ENCODE measurements at regions of chr12 and their contacts with region 1.

Region 1: DNA sequence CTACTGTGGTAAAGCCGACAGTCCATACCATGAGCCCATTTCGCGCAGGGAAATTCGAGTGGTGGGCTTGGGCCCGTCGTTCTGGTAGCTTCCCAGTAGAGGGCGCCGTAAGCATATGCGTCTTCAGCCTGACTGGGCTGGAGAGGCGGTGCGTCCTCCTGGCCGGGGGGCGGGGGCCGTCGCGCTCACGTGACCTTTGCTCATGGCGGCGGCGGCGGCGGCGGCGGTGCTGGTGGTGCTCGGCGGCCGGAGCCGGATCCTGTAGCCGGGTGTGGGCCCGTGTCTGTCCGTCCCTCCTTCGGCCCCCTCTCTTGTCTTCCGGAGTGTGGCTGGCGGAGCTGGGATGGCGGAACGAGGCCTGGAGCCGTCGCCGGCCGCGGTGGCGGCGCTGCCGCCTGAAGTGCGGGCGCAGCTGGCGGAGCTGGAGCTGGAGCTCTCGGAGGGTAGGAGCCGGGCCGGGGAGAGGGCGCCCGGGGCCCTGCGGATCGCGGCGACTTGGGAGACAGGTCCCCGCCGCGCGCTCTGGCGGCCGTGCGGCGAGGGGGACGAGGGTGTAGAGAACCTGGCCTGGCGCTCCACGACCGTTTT is at the start of gene DIP2B:
- DNase-seq: peak; percentile 96 to 98 (median 96)
- ATAC-seq: peak; percentile 88 to 98 (median 94)
- H3K4me3 ChIP-seq: peak within 1 kb of the TSS; percentile 69 to 97 (median 82)
- H3K27ac ChIP-seq: peak within 1 kb of the TSS; percentile 87 to 98 (median 94)
- H3K4me1 ChIP-seq: peaks cover 15 to 50% (median 44%) of the 10 kb centered on the region in 12 donors
- H3K27me3 ChIP-seq: no peaks in the 10 kb centered on the region
- CTCF ChIP-seq: peak; percentile 88 to 97 (median 94)
- POLR2A ChIP-seq: peak in 1 of 2 donors; percentile 56
- total RNA-seq, gene DIP2B: 12.0 to 25.0 (median 17.3) TPM

Region 2: GRCh38 chr12:50066433-50066832 is 438.5 kb before region 1 on chr12:
- intact Hi-C with region 1: no loop called
- DNase-seq: peak in 2 of 5 donors; percentile 35 to 42
- ATAC-seq: peak in 3 of 4 donors; percentile 43 to 61 (median 58)
- H3K4me3 ChIP-seq: no peak overlapping the region
- H3K27ac ChIP-seq: peak overlapping the region in 1 of 12 donors; percentile 34
- H3K4me1 ChIP-seq: peaks cover 0 to 13% (median 2%) of the 10 kb centered on the region in 12 donors
- H3K27me3 ChIP-seq: no peaks in the 10 kb centered on the region
- CTCF ChIP-seq: no peak
- POLR2A ChIP-seq: no peak

Region 3: DNA sequence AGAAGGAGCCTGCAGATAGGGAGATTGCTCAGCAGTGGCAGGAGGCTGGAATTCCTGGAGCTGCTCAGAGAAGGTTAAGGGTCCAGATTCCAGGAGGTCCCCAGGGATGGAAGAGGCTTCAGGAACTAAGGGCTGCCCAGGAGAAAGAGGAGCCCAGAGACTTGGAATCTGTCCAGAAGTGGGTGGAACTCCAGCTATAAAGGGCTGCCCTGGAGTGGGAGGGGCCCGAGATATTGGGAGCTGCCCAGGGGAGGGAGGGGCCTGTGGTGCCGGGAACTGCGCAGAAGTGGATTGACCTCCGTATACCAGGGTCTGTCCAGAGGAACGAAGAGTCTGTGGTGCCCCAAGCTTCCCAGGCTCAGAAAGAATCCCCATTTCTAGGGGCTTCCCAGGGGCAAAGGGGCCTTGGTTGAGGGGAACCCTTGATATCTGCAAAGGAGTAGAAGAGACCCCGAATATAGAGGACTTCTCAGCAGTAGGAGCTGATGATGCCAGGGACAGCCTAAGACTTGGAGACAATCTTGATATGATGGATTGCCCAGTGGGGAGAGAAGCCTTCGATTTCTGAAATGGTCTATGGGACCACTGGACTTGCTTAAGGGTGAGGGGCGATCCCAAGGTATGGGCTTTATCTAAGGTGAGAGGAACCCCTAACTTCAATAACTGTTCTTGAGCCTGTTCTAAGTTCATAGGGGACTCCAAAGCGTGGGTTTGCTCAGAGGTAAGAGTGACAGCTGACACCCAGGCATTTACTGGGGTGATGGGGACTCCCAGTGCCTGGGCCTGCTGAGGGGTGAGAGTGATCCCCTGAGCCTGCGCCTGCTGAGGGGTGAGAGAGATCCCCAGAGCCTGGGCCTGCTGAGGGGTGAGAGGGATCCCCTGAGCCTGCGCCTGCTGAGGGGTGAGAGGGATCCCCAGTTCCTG is 153.5 kb before region 1 on chr12:
- intact Hi-C with region 1: no loop called
- DNase-seq: peak; percentile 28 to 71 (median 53)
- ATAC-seq: peak; percentile 47 to 73 (median 66)
- H3K4me3 ChIP-seq: no peak overlapping the region
- H3K27ac ChIP-seq: no peak overlapping the region
- H3K4me1 ChIP-seq: peaks cover 0 to 17% (median 4%) of the 10 kb centered on the region in 12 donors
- H3K27me3 ChIP-seq: no peaks in the 10 kb centered on the region
- CTCF ChIP-seq: no peak
- POLR2A ChIP-seq: no peak

Region 4: GRCh38 chr12:50453874-50454273 is 51.0 kb before region 1 on chr12:
- intact Hi-C with region 1: no loop called
- DNase-seq: no peak
- ATAC-seq: no peak
- H3K4me3 ChIP-seq: no peak overlapping the region
- H3K27ac ChIP-seq: no peak overlapping the region
- H3K4me1 ChIP-seq: peaks cover 0 to 13% (median 3%) of the 10 kb centered on the region in 12 donors
- H3K27me3 ChIP-seq: no peaks in the 10 kb centered on the region
- CTCF ChIP-seq: no peak
- POLR2A ChIP-seq: no peak

Region 5: DNA sequence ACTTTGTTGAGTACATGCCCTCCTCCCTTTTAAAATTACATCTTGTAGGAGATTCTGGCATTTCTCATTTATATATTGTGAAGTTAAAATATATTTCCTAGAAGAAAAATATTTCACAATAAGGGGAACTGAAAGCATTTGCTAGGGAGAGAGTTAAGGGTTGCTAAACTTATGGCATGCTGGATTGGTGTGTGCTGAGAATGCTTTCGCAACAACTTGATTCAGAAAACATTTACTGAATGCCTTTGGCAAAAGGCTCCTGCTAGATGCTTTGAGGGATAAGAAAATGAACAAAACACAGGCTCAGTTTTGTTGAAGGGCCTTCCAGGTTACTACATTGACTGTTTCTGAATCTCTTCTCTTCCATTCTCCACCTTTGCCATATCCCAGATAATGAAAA is 67.4 kb after region 1 on chr12:
- intact Hi-C with region 1: loop called in 1 of 10 experiments (anchors 5 kb)
- DNase-seq: no peak
- ATAC-seq: peak; percentile 41 to 73 (median 50)
- H3K4me3 ChIP-seq: no peak overlapping the region
- H3K27ac ChIP-seq: peak overlapping the region in 4 of 12 donors; percentile 1 to 75 (median 36)
- H3K4me1 ChIP-seq: peaks cover 9 to 85% (median 58%) of the 10 kb centered on the region in 12 donors
- H3K27me3 ChIP-seq: no peaks in the 10 kb centered on the region
- CTCF ChIP-seq: no peak
- POLR2A ChIP-seq: no peak

Region 6: GRCh38 chr12:50620109-50620977 is 115.5 kb after region 1 on chr12:
- intact Hi-C with region 1: loop called in 1 of 10 experiments (anchors 5 kb)
- DNase-seq: peak in 1 of 5 donors; percentile 44
- ATAC-seq: peak; percentile 43 to 88 (median 72)
- H3K4me3 ChIP-seq: no peak overlapping the region
- H3K27ac ChIP-seq: peak overlapping the region in 2 of 12 donors; percentile 23 to 24
- H3K4me1 ChIP-seq: peaks cover 0 to 71% (median 43%) of the 10 kb centered on the region in 12 donors
- H3K27me3 ChIP-seq: no peaks in the 10 kb centered on the region
- CTCF ChIP-seq: no peak
- POLR2A ChIP-seq: no peak

Region 7: GRCh38 chr12:50637870-50638481 is 133.1 kb after region 1 on chr12:
- intact Hi-C with region 1: loop called (anchors 1 to 2 kb)
- DNase-seq: no peak
- ATAC-seq: peak in 1 of 4 donors; percentile 45
- H3K4me3 ChIP-seq: no peak overlapping the region
- H3K27ac ChIP-seq: peak overlapping the region in 1 of 12 donors; percentile 12
- H3K4me1 ChIP-seq: peaks cover 0 to 45% (median 33%) of the 10 kb centered on the region in 12 donors
- H3K27me3 ChIP-seq: no peaks in the 10 kb centered on the region
- CTCF ChIP-seq: peak; percentile 52 to 80 (median 65)
- POLR2A ChIP-seq: no peak

Region 8: DNA sequence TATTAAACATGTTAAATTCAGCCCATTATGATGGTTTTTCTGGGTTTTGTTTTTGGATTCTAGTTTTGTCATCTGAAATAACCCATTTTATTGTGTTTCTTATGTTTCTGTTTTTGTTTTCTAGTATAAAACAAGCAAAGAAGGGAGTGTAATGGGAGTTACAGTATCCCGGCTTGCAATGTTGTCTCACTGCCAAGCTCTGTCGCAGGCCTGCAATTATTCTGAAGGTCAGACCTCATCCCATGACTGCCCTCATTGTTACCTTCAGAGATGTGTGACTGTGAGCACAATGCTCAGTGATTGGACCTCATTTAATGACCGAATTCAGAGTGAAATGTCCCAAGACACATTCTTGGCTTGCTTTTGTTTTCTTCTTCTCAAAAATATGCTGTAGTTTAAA is 186.0 kb after region 1 on chr12:
- intact Hi-C with region 1: no loop called
- DNase-seq: peak in 4 of 5 donors; percentile 51 to 70 (median 56)
- ATAC-seq: peak; percentile 83 to 97 (median 90)
- H3K4me3 ChIP-seq: no peak overlapping the region
- H3K27ac ChIP-seq: peak overlapping the region in 7 of 12 donors; percentile 10 to 75 (median 55)
- H3K4me1 ChIP-seq: peaks cover 0 to 13% (median 0%) of the 10 kb centered on the region in 12 donors
- H3K27me3 ChIP-seq: no peaks in the 10 kb centered on the region
- CTCF ChIP-seq: no peak
- POLR2A ChIP-seq: no peak

Region 9: GRCh38 chr12:50725011-50725942 is 220.4 kb after region 1 on chr12:
- intact Hi-C with region 1: loop called in 7 of 10 experiments (anchors 5 to 10 kb)
- DNase-seq: no peak
- ATAC-seq: peak in 1 of 4 donors; percentile 23
- H3K4me3 ChIP-seq: no peak overlapping the region
- H3K27ac ChIP-seq: peak overlapping the region in 4 of 12 donors; percentile 25 to 36 (median 31)
- H3K4me1 ChIP-seq: peaks cover 0 to 24% (median 8%) of the 10 kb centered on the region in 12 donors
- H3K27me3 ChIP-seq: no peaks in the 10 kb centered on the region
- CTCF ChIP-seq: no peak
- POLR2A ChIP-seq: no peak

Region 10: DNA sequence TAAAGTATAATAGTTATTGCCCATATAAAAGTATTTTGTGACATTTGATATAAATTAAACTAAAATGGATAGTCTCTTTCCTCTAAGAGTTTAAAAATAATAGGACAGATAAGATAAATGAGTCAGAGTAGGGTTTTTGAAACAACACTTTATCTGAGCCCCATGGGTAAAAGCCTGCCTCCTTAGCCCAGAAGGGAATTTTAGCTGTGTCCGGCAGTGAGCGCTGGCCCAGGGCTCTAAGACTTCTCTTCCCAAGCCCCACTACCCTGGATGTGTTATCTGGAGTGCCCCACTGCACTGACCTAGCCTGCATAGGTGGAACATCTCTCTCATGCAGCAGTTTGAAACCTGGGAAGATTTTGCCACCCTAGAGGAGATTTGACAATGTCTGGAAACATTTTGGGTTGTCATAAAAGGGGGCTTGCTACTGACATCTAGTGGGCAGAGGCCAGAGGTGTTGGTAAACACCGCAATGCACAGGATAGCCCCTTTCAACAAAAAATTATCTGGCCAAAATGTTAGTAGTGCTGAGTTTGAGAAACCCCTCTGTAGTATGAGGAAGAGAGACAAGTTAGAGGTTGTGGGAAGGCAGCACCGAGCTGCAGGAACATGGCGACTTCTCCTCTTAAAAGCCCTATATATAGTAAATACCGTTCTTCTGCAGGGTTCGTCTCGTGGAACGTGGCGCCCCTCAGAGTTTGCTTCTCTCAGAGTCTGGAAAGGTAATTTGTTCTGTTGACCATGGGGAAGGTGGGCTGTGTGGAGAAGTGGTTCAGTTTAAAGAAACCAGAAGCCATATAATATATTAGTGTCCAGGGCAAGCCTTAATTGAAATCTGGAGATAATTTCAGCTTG is 229.7 kb after region 1 on chr12:
- intact Hi-C with region 1: loop called in 9 of 10 experiments (anchors 2 to 10 kb)
- DNase-seq: no peak
- ATAC-seq: peak; percentile 46 to 62 (median 58)
- H3K4me3 ChIP-seq: no peak overlapping the region
- H3K27ac ChIP-seq: no peak overlapping the region
- H3K4me1 ChIP-seq: peaks cover 0 to 3% (median 0%) of the 10 kb centered on the region in 12 donors
- H3K27me3 ChIP-seq: no peaks in the 10 kb centered on the region
- CTCF ChIP-seq: peak; percentile 42 to 72 (median 60)
- POLR2A ChIP-seq: no peak

Region 11: GRCh38 chr12:51341259-51342007 is 836.5 kb after region 1 on chr12:
- intact Hi-C with region 1: loop called in 2 of 10 experiments (anchors 10 kb)
- DNase-seq: peak in 4 of 5 donors; percentile 42 to 64 (median 46)
- ATAC-seq: peak; percentile 42 to 88 (median 88)
- H3K4me3 ChIP-seq: peak overlapping the region in 8 of 12 donors; percentile 8 to 51 (median 28)
- H3K27ac ChIP-seq: peak overlapping the region in 1 of 12 donors; percentile 1
- H3K4me1 ChIP-seq: peaks cover 0 to 6% (median 1%) of the 10 kb centered on the region in 12 donors
- H3K27me3 ChIP-seq: no peaks in the 10 kb centered on the region
- CTCF ChIP-seq: peak; percentile 89 to 99 (median 94)
- POLR2A ChIP-seq: no peak